ENCODE measurements at regions of chr2 and their contacts with region 1.

Region 1: DNA sequence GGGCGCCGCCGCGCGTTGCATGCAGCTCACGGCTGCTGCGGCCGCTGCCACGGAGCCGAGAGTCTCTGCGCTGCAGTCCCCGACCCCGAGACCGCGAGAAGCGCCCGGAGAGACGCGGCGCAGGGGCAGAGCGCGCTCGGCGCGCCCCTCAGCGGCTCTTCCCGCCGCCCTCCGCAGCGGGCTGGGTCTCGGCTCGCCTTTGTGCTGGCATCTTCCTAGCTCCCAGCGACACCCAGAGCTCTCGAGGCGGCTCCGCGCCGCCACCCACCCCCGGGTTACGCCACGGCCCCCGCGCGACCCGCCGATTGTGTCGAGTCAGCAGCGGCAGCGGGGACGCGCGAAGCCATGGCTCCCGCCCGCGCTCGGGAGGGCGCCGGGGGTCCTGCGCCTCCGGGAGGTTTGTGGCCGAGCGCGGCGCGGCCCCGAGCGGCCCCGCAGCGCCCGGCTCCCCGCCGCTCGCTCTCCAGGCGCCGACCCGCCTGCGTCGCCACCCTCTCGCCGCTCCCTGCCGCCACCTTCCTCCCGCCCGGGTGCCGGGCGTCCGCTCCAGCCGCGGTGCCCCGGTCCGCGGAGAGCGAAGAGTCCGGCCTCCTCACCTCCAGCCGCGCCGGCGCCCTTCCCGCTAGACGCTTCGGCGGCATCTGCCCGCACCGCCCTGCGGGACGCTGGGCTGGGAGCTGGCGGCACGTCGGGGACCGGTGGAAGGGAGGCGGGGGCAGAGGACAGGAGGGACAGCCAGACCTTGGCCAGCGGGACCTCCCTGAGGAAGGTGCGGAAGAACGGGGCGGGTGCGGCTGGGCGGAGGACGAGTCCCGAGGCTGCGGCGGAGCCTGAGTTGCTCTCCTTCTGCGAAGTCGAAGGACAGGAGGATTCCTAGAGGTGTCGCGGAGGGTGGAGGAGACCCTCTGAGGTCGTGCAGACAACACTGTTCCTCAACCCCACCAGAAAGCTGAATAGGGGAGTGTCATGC is 46.3 kb upstream of the CCDC150 start:
- DNase-seq: peak; percentile 35 to 44
- ATAC-seq: peak; percentile 67 to 89 (median 78)
- H3K4me3 ChIP-seq: peak within 1 kb of the TSS; percentile 47 to 79 (median 71)
- H3K27ac ChIP-seq: peak within 1 kb of the TSS; percentile 58 to 93 (median 84)
- H3K4me1 ChIP-seq: peaks cover 0 to 18% (median 6%) of the 10 kb centered on the region in 9 donors
- H3K27me3 ChIP-seq: peaks cover 0 to 58% (median 4%) of the 10 kb centered on the region in 7 donors
- CTCF ChIP-seq: peak in 4 of 9 donors; percentile 16 to 43 (median 30)

Region 2: GRCh38 chr2:195995499-195995898 is 597.7 kb before region 1 on chr2:
- intact Hi-C with region 1: no loop called
- DNase-seq: no peak
- ATAC-seq: no peak
- H3K4me3 ChIP-seq: no peak overlapping the region
- H3K27ac ChIP-seq: no peak overlapping the region
- H3K4me1 ChIP-seq: no peaks in the 10 kb centered on the region
- H3K27me3 ChIP-seq: no peaks in the 10 kb centered on the region
- CTCF ChIP-seq: no peak

Region 3: GRCh38 chr2:196284144-196284844 is 308.9 kb before region 1 on chr2:
- intact Hi-C with region 1: no loop called
- DNase-seq: no peak
- ATAC-seq: peak; percentile 75 to 98 (median 86)
- H3K4me3 ChIP-seq: no peak overlapping the region
- H3K27ac ChIP-seq: peak overlapping the region in 9 of 10 donors; percentile 14 to 59 (median 48)
- H3K4me1 ChIP-seq: peaks cover 5 to 45% (median 24%) of the 10 kb centered on the region in 9 donors
- H3K27me3 ChIP-seq: no peaks in the 10 kb centered on the region
- CTCF ChIP-seq: no peak

Region 4: DNA sequence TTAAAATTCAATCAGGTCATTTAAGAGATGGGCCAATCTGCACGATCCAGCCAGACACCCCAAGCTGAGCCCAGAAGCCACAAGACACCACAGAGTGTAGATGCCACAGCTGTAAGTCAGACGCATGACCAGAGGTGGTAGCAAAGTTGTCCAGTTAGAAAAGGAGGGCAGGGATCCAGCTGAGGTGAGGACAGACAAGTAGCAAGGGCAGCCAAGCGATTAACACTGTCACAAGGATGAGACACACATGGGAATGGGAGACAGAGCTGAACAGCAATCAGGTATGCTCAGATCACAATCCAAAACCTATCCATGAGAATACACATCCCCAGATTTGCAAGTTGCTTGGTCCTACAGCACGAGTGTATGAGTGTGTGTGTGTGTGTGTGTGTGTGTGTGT is 278.4 kb before region 1 on chr2:
- intact Hi-C with region 1: loop called in 1 of 10 experiments (anchors 10 kb)
- DNase-seq: peak in 1 of 2 donors; percentile 65
- ATAC-seq: peak; percentile 39 to 88 (median 76)
- H3K4me3 ChIP-seq: no peak overlapping the region
- H3K27ac ChIP-seq: peak overlapping the region in 1 of 10 donors; percentile 58
- H3K4me1 ChIP-seq: peaks cover 0 to 41% (median 3%) of the 10 kb centered on the region in 9 donors
- H3K27me3 ChIP-seq: no peaks in the 10 kb centered on the region
- CTCF ChIP-seq: peak in 3 of 9 donors; percentile 15 to 27 (median 20)

Region 5: GRCh38 chr2:196473617-196474016 is 119.6 kb before region 1 on chr2:
- intact Hi-C with region 1: loop called in 2 of 10 experiments (anchors 5 to 10 kb)
- DNase-seq: peak in 1 of 2 donors; percentile 29
- ATAC-seq: peak; percentile 72 to 97 (median 92)
- H3K4me3 ChIP-seq: no peak overlapping the region
- H3K27ac ChIP-seq: peak overlapping the region in 7 of 10 donors; percentile 4 to 76 (median 67)
- H3K4me1 ChIP-seq: peaks cover 0 to 31% (median 9%) of the 10 kb centered on the region in 9 donors
- H3K27me3 ChIP-seq: no peaks in the 10 kb centered on the region
- CTCF ChIP-seq: no peak

Region 6: DNA sequence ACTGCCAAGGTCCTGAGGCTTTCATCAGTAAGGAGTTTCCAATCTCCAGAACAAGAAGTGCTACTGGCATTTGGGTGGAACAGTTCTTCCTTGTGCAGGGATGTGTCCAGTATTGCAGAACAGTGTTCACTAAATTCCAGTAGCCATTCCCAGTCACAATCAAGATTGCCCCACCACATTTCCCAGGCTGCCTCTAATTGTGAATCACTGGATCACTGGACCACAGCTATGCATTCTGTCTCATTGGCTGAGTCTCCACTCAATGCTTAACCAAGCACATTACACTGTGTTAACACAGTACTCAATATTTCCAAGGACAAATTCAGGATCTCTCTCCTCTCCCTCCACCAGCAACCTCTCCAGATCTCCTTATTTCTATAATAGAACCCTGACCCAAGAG is 113.8 kb before region 1 on chr2:
- intact Hi-C with region 1: loop called in 2 of 10 experiments (anchors 5 to 10 kb)
- DNase-seq: no peak
- ATAC-seq: no peak
- H3K4me3 ChIP-seq: no peak overlapping the region
- H3K27ac ChIP-seq: peak overlapping the region in 2 of 10 donors; percentile 58 to 59
- H3K4me1 ChIP-seq: peaks cover 0 to 52% (median 19%) of the 10 kb centered on the region in 9 donors
- H3K27me3 ChIP-seq: no peaks in the 10 kb centered on the region
- CTCF ChIP-seq: no peak

Measured in heart right ventricle (tissue), 16 donors.